Astrocyte of the cerebellum (primary cell): ENCODE measurements at regions of chr11 and their contacts with region 1.

Region 1: GRCh38 chr11:69985641-69986439 is 92.3 kb upstream of the ANO1 start:
- DNase-seq: no peak
- H3K4me3 ChIP-seq: peak overlapping the region; percentile 18
- CTCF ChIP-seq: no peak

Region 2: GRCh38 chr11:69919659-69920424 is 66.0 kb before region 1 on chr11:
- in situ Hi-C with region 1: loop called (anchors 5 kb)
- DNase-seq: no peak
- H3K4me3 ChIP-seq: no peak overlapping the region
- CTCF ChIP-seq: no peak